ENCODE measurements at regions of chr1 and their contacts with region 1.

Region 1: DNA sequence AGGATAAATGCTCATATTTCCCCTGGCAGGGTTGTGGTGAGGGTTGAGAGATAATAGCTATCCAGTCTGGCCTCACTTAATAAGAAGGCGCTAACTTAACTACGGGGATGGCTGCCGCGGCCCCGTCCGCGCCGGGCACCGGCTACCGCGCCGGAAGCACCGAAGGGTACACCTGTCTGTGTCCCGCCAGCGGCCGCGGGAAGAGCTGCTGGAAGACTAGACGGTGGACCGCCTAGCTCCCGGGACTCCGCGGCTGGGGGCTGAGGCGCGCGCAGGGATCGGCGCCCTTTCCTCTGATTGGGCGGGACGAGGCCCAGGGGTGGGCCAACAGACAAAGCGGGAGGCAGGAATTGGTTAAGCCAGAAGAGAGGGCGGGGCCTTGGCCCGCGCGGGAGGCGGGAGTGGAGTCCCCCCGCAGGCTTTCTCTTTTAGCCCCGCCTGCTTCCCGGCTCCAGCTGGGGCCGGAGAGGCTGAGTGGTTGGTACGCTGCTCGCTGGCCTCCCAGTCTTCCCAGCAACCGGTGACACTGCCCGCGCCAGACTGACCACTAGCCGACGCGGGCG is at the start of gene ZNF672:
- DNase-seq: peak; percentile 98 to 99
- H3K4me3 ChIP-seq: peak within 1 kb of the TSS; percentile 90 to 93
- H3K27ac ChIP-seq: peak within 1 kb of the TSS; percentile 99
- H3K4me1 ChIP-seq: peaks cover 0 to 9% of the 10 kb centered on the region in 2 donors
- H3K27me3 ChIP-seq: no peaks in the 10 kb centered on the region
- CTCF ChIP-seq: no peak
- POLR2A ChIP-seq: peak; percentile 81 to 91
- total RNA-seq, gene ZNF672: 15.0 to 34.3 (median 24.0) TPM

Region 2: GRCh38 chr1:248611883-248612414 is 225.9 kb before region 1 on chr1:
- intact Hi-C with region 1: no loop called
- DNase-seq: no peak
- H3K4me3 ChIP-seq: no peak overlapping the region
- H3K27ac ChIP-seq: no peak overlapping the region
- H3K4me1 ChIP-seq: no peaks in the 10 kb centered on the region
- H3K27me3 ChIP-seq: no peaks in the 10 kb centered on the region
- CTCF ChIP-seq: no peak
- POLR2A ChIP-seq: no peak

Region 3: DNA sequence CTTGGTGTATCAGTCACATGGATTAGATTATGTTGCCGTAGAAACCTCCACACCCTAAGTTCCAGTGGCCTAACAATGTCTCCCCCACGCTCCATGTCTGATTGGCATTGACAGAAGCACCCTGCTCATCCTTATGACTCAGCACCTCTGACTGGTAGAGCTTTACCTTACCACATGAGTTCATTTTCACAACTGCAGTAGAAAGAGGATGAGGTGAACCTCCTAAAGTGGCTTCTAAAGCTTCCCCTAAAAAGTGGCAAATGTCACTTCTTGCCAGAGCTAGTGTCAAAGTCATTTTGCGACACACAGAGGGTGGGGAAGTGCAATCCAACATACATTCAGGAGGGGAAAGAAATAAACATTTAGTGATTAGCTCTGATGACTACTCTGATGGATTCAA is 51.7 kb before region 1 on chr1:
- intact Hi-C with region 1: no loop called
- DNase-seq: no peak
- H3K4me3 ChIP-seq: no peak overlapping the region
- H3K27ac ChIP-seq: no peak overlapping the region
- H3K4me1 ChIP-seq: no peaks in the 10 kb centered on the region
- H3K27me3 ChIP-seq: no peaks in the 10 kb centered on the region
- CTCF ChIP-seq: no peak
- POLR2A ChIP-seq: no peak

Region 4: GRCh38 chr1:248858891-248859889 is 21.3 kb after region 1 on chr1 and contains the start of gene ZNF692:
- intact Hi-C with region 1: loop called (anchors 2 kb)
- DNase-seq: peak; percentile 95 to 97
- H3K4me3 ChIP-seq: peak within 1 kb of the TSS; percentile 60 to 73
- H3K27ac ChIP-seq: peak within 1 kb of the TSS; percentile 92 to 95
- H3K4me1 ChIP-seq: peaks cover 0 to 7% of the 10 kb centered on the region in 2 donors
- H3K27me3 ChIP-seq: no peaks in the 10 kb centered on the region
- CTCF ChIP-seq: peak in 1 of 4 experiments; percentile 36
- POLR2A ChIP-seq: peak; percentile 73 to 82
- total RNA-seq, gene ZNF692: 21.2 to 43.5 (median 29.2) TPM

Measured in uterus (tissue), 4 donors.